Calu3 (cell line): ENCODE measurements at regions of chr5 and their contacts with region 1.

Region 1: GRCh38 chr5:167587772-167588437 is 703.5 kb upstream of the WWC1 start:
- DNase-seq: peak; percentile 48
- H3K4me3 Mint-ChIP-seq: no peak overlapping the region
- H3K27ac Mint-ChIP-seq: no peak overlapping the region
- H3K4me1 Mint-ChIP-seq: no peaks in the 10 kb centered on the region
- H3K27me3 Mint-ChIP-seq: no peaks in the 10 kb centered on the region
- CTCF ChIP-seq: peak; percentile 67

Region 2: DNA sequence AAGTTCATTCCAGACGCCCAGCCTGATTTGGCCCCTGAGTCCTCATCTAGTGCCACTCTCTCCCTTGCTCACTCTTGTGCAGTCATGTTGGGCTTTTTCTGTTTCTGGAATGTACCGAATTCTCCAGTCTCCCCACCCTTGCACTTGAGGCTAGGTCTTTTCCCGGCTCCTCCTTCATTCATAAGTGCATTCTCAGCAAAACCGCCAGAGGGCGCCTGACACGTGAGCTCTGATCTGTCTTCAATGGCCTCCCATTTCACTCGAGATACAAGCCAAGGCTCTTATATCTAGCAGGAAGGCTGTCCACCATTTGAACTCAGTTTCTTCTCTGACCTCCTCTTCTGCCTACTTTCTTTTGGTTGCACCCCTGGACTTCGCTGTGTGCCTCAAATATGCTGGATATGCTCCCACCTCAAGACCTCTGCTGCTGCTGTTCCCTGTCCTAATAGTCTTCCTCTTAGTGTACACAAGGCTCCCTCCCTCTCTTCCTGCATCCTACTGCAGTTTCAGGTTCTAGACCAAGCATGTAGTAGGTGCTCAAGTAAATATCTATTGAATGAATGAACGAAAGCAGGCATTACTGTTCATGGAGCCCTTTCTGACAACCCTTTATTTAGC is 135.5 kb after region 1 on chr5:
- CTCF ChIA-PET with region 1: no interaction called
- intact Hi-C with region 1: loop called (anchors 1 kb)
- DNase-seq: peak; percentile 82
- H3K4me3 Mint-ChIP-seq: no peak overlapping the region
- H3K27ac Mint-ChIP-seq: peak overlapping the region; percentile 45
- H3K4me1 Mint-ChIP-seq: peaks cover 11% of the 10 kb centered on the region
- H3K27me3 Mint-ChIP-seq: no peaks in the 10 kb centered on the region
- CTCF ChIP-seq: peak; percentile 94